ENCODE measurements at regions of chr6 and their contacts with region 1.

Region 1: GRCh38 chr6:138389551-138389950 is 11.8 kb downstream of the SMIM28 start:
- DNase-seq: no peak
- ATAC-seq: no peak
- H3K4me3 ChIP-seq: no peak overlapping the region
- H3K27ac ChIP-seq: no peak overlapping the region
- H3K4me1 ChIP-seq: peaks cover 0 to 15% of the 10 kb centered on the region in 2 experiments; a peak in 2 of 5 replicates
- H3K27me3 ChIP-seq: peaks cover 8 to 12% of the 10 kb centered on the region in 2 experiments; a peak in 4 of 5 replicates
- CTCF ChIP-seq: no peak
- EP300 ChIP-seq: no peak
- POLR2A ChIP-seq: no peak
- RAD21 ChIP-seq: no peak

Region 2: GRCh38 chr6:138357928-138358327 is 31.6 kb before region 1 on chr6:
- CTCF ChIA-PET with region 1: no interaction called
- POLR2A ChIA-PET with region 1: no interaction called
- in situ Hi-C with region 1: no loop called
- intact Hi-C with region 1: loop called (anchors 1 kb)
- DNase-seq: no peak
- ATAC-seq: no peak
- H3K4me3 ChIP-seq: no peak overlapping the region
- H3K27ac ChIP-seq: no peak overlapping the region
- H3K4me1 ChIP-seq: no peaks in the 10 kb centered on the region
- H3K27me3 ChIP-seq: peaks cover 0 to 4% of the 10 kb centered on the region in 2 experiments; a peak in 2 of 5 replicates
- CTCF ChIP-seq: no peak
- EP300 ChIP-seq: no peak
- POLR2A ChIP-seq: no peak
- RAD21 ChIP-seq: no peak

Region 3: DNA sequence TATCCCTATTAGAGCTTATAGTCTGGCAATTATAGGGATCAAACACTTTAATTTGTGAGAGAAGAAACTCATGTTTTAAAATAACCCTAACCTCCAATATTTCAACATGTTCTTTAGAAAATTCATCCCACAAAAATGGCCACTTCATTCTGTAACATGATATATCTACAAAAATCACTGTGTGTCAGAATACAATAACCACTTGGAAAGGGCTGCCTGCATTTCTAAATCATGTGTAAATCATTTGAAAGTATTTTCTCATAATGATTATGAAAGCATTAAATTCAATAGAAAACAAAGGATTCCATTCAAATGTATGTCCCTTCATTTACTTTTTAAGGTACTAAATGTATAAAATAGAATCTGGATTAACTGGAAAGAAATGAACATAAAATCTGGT is 211.2 kb after region 1 on chr6:
- CTCF ChIA-PET with region 1: no interaction called
- POLR2A ChIA-PET with region 1: no interaction called
- in situ Hi-C with region 1: no loop called
- intact Hi-C with region 1: no loop called
- DNase-seq: no peak
- ATAC-seq: no peak
- H3K4me3 ChIP-seq: no peak overlapping the region
- H3K27ac ChIP-seq: no peak overlapping the region
- H3K4me1 ChIP-seq: no peaks in the 10 kb centered on the region
- H3K27me3 ChIP-seq: peaks cover 9 to 24% of the 10 kb centered on the region in 2 experiments; a peak in 4 of 5 replicates
- CTCF ChIP-seq: no peak
- EP300 ChIP-seq: no peak
- POLR2A ChIP-seq: no peak
- RAD21 ChIP-seq: no peak

Region 4: DNA sequence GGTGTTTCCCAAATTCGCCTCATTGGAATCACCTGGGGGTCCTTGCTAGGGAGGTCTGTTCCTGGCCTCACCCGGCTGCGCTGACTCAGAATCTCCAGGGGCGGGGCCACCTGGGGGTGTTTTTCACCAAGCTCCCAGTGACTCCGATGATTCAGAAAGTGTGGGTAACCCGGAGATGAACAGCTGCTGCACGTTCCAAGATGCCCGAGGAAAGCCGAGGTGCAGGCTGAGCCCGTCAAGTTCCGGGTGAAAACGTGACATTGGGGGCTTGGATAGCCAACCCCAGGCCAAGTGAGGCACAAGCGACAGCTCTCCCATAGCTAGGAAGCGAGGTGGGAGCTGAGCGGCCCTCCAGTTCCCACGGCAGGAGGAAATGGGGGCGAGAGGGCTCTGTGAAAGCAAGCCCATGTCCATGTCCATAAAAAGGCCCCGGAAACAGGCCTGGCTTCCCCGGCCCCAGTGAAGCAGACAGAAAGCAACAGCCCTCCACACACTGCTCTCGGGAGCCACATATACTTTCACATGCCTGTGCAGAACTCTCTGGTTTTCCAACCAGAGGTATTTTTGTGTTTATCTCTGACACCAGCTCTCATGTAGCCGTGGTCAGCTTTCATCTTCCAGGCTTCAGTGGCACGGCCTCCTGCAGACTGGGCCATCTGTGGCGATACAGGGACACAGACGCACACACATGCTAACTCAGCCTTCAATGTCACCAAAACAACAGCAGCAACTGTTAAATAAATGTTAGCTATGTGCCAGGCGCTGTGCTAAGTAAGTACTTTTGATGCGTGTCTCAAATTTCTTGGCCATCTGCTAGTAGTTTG is 293.4 kb after region 1 on chr6:
- CTCF ChIA-PET with region 1: no interaction called
- POLR2A ChIA-PET with region 1: no interaction called
- in situ Hi-C with region 1: no loop called
- intact Hi-C with region 1: no loop called
- DNase-seq: peak; percentile 45 to 64 (median 52)
- ATAC-seq: peak; percentile 75
- H3K4me3 ChIP-seq: no peak overlapping the region
- H3K27ac ChIP-seq: no peak overlapping the region
- H3K4me1 ChIP-seq: peaks cover 2 to 4% of the 10 kb centered on the region in 2 experiments; a peak in 2 of 5 replicates
- H3K27me3 ChIP-seq: peaks cover 8 to 15% of the 10 kb centered on the region in 2 experiments; a peak in 4 of 5 replicates
- CTCF ChIP-seq: no peak
- EP300 ChIP-seq: no peak
- POLR2A ChIP-seq: no peak
- RAD21 ChIP-seq: no peak

Measured in K562 (cell line).